ENCODE measurements at regions of chr12 and their contacts with region 1.

Region 1: GRCh38 chr12:49763006-49763591 is 21.7 kb downstream of the TMBIM6 start:
- DNase-seq: peak; percentile 84
- H3K4me3 Mint-ChIP-seq: peak overlapping the region; percentile 3
- H3K27ac Mint-ChIP-seq: peak overlapping the region; percentile 92
- H3K4me1 Mint-ChIP-seq: peaks cover 51% of the 10 kb centered on the region
- H3K27me3 Mint-ChIP-seq: peaks cover 2% of the 10 kb centered on the region

Region 2: GRCh38 chr12:49636979-49637755 is 125.9 kb before region 1 on chr12:
- CTCF ChIA-PET with region 1: interaction called, 11 read pairs
- POLR2A ChIA-PET with region 1: no interaction called
- DNase-seq: peak; percentile 68
- H3K4me3 Mint-ChIP-seq: no peak overlapping the region
- H3K27ac Mint-ChIP-seq: no peak overlapping the region
- H3K4me1 Mint-ChIP-seq: peaks cover 16% of the 10 kb centered on the region
- H3K27me3 Mint-ChIP-seq: no peaks in the 10 kb centered on the region

Region 3: GRCh38 chr12:49750027-49750995 is 12.8 kb before region 1 on chr12:
- CTCF ChIA-PET with region 1: interaction called, 36 read pairs
- POLR2A ChIA-PET with region 1: interaction called, 54 read pairs
- DNase-seq: peak; percentile 66
- H3K4me3 Mint-ChIP-seq: peak overlapping the region; percentile 48
- H3K27ac Mint-ChIP-seq: peak overlapping the region; percentile 85
- H3K4me1 Mint-ChIP-seq: peaks cover 81% of the 10 kb centered on the region
- H3K27me3 Mint-ChIP-seq: no peaks in the 10 kb centered on the region

Region 4: GRCh38 chr12:49776413-49776812 is 13.3 kb after region 1 on chr12:
- CTCF ChIA-PET with region 1: interaction called, 20 read pairs
- POLR2A ChIA-PET with region 1: interaction called, 4 read pairs
- DNase-seq: peak; percentile 68
- H3K4me3 Mint-ChIP-seq: no peak overlapping the region
- H3K27ac Mint-ChIP-seq: no peak overlapping the region
- H3K4me1 Mint-ChIP-seq: peaks cover 17% of the 10 kb centered on the region
- H3K27me3 Mint-ChIP-seq: peaks cover 20% of the 10 kb centered on the region

Region 5: DNA sequence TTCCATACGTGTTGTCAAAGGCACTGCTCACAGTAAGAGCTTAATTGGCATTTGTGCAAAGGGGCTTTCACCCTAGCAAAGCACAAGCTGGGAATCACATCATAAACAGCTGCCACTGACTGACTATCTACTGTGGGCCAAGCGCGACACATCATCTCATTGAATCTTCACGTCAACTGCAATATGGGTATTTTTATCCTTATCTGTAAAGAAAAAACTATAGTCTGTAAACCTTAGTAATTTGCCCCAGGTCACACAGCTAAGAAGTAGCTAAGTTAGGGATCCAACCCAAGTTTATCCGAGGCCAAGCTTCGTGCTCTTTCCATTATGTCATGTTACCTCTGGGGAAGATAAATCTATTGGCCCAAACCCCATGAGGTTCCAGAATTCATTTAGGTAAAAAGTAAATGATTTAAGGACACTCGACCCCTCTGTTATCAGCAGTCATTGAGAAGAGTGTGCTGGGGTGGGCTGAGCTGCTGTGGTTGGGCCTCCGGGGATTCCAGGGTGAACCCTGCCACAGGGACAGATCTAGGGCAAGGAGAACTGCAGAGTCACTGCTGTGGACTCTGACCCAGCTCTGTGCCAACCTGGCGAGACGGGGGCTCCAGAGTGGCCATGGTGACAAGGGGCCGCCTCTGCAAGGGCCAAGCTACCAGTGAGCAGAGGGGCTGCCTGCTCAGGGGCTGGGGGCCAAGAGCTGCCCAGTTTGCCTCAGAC is 37.5 kb after region 1 on chr12:
- CTCF ChIA-PET with region 1: no interaction called
- POLR2A ChIA-PET with region 1: no interaction called
- DNase-seq: no peak
- H3K4me3 Mint-ChIP-seq: no peak overlapping the region
- H3K27ac Mint-ChIP-seq: no peak overlapping the region
- H3K4me1 Mint-ChIP-seq: no peaks in the 10 kb centered on the region
- H3K27me3 Mint-ChIP-seq: no peaks in the 10 kb centered on the region

Region 6: GRCh38 chr12:49842519-49843352 is 79.6 kb after region 1 on chr12 and contains the start of gene BCDIN3D:
- CTCF ChIA-PET with region 1: interaction called, 24 read pairs
- POLR2A ChIA-PET with region 1: no interaction called
- DNase-seq: peak; percentile 93
- H3K4me3 Mint-ChIP-seq: peak within 1 kb of the TSS; percentile 81
- H3K27ac Mint-ChIP-seq: peak within 1 kb of the TSS; percentile 79
- H3K4me1 Mint-ChIP-seq: peaks cover 42% of the 10 kb centered on the region
- H3K27me3 Mint-ChIP-seq: no peaks in the 10 kb centered on the region
- total RNA-seq, gene BCDIN3D: 8.9 to 9.9 TPM